SK-N-SH (cell line): ENCODE measurements at regions of chr9 and their contacts with region 1.

Region 1: DNA sequence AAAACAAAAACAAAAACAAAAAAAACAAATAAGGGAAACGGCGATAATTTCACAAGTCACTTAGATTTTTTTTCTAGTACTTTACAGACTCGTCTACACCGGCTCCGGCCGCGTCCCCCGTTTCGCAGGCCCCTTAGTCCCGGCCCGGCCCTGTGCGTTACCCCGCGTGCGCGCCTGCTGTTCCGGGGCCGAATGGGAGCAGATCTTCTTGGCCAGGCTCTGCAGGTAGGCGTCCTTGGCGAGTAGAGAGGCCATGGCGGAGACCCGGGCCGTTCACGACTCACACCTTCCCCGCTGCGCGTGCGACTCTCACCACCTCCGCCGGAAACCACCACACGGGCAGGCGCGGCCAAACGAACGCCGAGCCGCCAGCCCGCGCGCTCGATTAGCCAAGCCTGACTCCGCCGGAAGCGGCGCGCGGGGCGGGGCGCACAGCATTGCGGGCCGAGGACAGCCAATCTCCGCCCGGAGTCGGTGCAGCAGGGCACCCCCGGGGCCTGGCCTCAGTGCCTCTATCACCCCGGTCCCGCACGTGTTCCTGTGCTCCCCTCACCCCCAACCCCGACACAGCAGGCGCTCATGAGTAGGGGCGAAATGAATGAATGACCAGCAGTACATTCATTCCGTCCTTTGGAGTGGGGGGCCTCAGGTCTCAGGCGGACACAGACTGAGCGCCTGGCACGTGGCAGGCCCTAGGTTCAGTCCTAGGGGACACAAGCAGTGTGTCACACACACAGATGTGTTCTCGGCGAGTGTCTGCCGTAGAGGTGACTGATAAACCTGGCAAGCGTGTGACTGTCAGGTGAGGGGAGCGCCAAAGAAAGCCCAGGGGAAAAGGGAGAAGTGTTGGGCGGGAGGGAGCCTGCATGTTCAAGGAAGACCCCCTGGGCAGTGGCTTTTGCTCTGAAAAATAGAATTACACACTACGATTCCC is at the start of gene SURF6:
- DNase-seq: peak; percentile 96
- H3K4me3 ChIP-seq: peak within 1 kb of the TSS; percentile 70 to 100
- H3K27ac ChIP-seq: peak within 1 kb of the TSS; percentile 67 to 76
- H3K4me1 ChIP-seq: peaks cover 8 to 15% of the 10 kb centered on the region in 2 experiments; a peak in 1 of 4 replicates
- H3K27me3 ChIP-seq: no peaks in the 10 kb centered on the region
- CTCF ChIP-seq: no peak
- EP300 ChIP-seq: no peak
- RAD21 ChIP-seq: no peak
- polyA plus RNA-seq, gene SURF6: 42.1 and 44.5 TPM in 2 replicates

Region 2: GRCh38 chr9:133347985-133348717 is 12.0 kb after region 1 on chr9 and contains the starts of genes MED22 and RPL7A:
- CTCF ChIA-PET with region 1: interaction called, 13 read pairs
- POLR2A ChIA-PET with region 1: interaction called, 16 read pairs
- DNase-seq: peak; percentile 92
- H3K4me3 ChIP-seq: peak within 1 kb of the TSS; percentile 99
- H3K27ac ChIP-seq: peak within 1 kb of the TSS; percentile 89 to 97
- H3K4me1 ChIP-seq: peaks cover 8 to 27% of the 10 kb centered on the region in 2 experiments; a peak in 2 of 4 replicates
- H3K27me3 ChIP-seq: no peaks in the 10 kb centered on the region
- CTCF ChIP-seq: no peak
- EP300 ChIP-seq: peak in 1 of 2 experiments; percentile 38; a peak in 1 of 4 replicates
- RAD21 ChIP-seq: no peak
- polyA plus RNA-seq, gene MED22: 23.0 and 27.9 TPM in 2 replicates
- polyA plus RNA-seq, gene RPL7A: 3,936 and 4,121 TPM in 2 replicates